ENCODE measurements at regions of chr10 and their contacts with region 1.

Region 1: DNA sequence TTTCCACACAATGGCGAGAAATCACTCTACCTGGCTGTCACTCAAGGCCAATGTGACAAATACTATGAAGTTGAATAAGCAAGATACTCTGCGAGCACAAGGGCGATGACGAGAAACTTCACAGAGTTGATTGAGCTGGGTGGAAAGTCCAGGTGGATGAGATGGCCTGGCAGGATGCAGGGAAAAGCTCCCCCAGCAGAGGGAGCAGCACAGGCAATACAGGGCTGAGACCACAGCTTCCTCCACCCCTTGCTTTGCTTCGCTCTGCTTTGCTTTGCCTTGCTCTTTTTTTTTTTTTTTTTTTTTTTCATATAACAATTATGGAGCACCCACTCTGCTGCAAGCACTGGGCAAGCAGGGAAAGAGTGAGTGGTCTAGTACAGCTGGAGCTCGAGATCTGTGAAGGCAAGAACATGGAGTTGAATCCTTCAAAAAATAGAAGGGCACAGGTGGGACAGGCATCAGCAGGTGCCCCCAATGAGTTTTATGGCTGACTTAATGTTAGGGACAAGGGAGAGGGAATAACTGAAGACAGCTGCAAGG is 88.3 kb downstream of the CABCOCO1 start:
- DNase-seq: peak; percentile 71 to 78
- ATAC-seq: peak; percentile 77
- H3K4me3 ChIP-seq: no peak overlapping the region
- H3K27ac ChIP-seq: peak overlapping the region in 1 of 2 donors; percentile 21
- H3K4me1 ChIP-seq: peaks cover 3 to 13% of the 10 kb centered on the region in 2 donors
- H3K27me3 ChIP-seq: no peaks in the 10 kb centered on the region

Region 2: DNA sequence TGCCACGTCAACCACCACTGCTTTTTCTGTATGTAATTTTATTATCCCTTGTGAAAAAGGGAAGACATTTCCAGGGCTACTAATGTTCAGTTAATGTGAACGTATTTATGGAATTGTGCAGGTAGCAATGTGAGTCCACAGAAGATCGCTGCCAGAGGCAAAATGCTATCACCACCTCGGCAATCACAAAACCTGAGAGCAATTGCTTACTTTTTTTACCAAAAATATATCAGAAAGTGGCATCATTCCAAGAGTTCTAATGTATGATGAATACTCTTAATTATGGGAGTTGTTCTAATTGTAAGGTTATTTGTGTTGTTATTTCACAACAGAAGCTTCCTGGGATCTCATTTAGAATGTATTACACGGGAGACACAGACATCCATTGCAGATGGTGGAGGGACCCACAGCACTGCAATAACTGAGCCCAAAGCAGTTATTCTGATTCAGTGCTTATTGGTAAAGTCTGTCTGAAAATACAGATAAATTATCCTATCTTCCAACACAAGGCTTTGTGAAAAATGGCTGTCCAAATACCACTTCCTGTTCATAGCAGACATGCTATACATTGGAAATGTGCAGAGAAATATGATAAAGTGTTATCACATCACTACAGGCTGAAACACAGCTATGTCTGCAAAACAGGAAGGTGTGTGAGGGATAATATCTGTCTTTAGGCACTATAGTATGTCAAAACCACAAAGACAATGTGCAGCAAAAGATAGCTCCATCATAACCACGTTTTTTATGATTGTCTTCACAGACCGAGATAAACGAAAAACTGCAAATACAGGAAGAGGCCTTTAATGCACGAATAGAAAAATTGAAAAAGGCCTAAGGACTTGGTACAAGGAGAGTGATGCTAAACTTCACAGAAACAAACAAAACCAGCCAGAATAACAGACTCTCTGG is 14.4 kb after region 1 on chr10:
- intact Hi-C with region 1: no loop called
- DNase-seq: no peak
- ATAC-seq: no peak
- H3K4me3 ChIP-seq: no peak overlapping the region
- H3K27ac ChIP-seq: no peak overlapping the region
- H3K4me1 ChIP-seq: peaks cover 0 to 1% of the 10 kb centered on the region in 2 donors
- H3K27me3 ChIP-seq: no peaks in the 10 kb centered on the region

Region 3: GRCh38 chr10:61786728-61787127 is 35.7 kb after region 1 on chr10:
- intact Hi-C with region 1: loop called (anchors 5 kb)
- DNase-seq: no peak
- ATAC-seq: no peak
- H3K4me3 ChIP-seq: peak overlapping the region in 1 of 2 donors; percentile 64
- H3K27ac ChIP-seq: peak overlapping the region; percentile 57 to 94
- H3K4me1 ChIP-seq: peaks cover 0 to 7% of the 10 kb centered on the region in 2 donors
- H3K27me3 ChIP-seq: no peaks in the 10 kb centered on the region

Region 4: DNA sequence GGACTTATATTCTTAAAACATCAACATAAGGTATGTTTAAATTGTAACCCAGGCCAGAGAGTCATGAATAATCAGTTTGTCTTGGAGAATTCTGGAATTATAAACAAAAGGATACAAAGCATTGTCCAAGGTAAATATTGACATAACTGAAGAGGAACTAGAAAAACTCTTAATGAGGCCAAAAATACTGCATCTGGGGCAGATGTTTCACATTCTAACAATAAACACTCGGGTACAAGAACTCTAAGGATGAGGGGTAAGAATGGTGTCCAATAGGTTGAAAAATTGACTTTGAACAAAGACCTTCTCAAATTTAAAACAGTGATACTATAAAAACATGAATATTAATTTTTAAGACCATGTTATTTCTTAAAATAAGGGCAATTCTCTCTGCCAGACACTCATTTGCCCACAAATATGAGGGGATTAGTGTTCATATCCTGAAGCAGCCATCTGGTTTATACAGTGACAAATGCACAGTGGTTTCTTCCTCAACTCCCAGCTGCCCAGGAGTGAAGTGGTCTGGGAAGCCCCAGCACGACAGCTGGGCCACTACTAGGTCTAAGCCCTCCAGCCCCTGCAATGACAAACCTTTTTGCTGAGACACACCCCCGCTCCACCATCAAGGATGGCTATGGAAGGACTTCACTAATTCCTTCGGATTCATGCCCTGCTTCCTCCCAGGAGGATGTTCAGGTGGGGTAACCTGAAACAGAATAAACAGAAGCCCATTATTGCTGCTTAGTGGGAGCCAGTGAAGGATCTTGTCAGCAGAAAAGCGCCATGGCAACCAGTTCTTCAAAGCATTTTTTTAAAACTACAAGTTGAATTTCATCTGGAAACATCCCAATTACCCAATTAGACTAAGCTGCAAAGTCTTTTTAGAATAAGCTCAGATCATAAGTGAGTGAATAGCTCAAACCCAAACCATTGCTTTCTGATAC is 43.0 kb after region 1 on chr10:
- intact Hi-C with region 1: loop called (anchors 5 kb)
- DNase-seq: no peak
- ATAC-seq: no peak
- H3K4me3 ChIP-seq: no peak overlapping the region
- H3K27ac ChIP-seq: no peak overlapping the region
- H3K4me1 ChIP-seq: peaks cover 0 to 4% of the 10 kb centered on the region in 2 donors
- H3K27me3 ChIP-seq: no peaks in the 10 kb centered on the region

Region 5: GRCh38 chr10:61804414-61804813 is 53.4 kb after region 1 on chr10:
- intact Hi-C with region 1: no loop called
- DNase-seq: no peak
- ATAC-seq: no peak
- H3K4me3 ChIP-seq: no peak overlapping the region
- H3K27ac ChIP-seq: no peak overlapping the region
- H3K4me1 ChIP-seq: peaks cover 0 to 3% of the 10 kb centered on the region in 2 donors
- H3K27me3 ChIP-seq: no peaks in the 10 kb centered on the region

Region 6: GRCh38 chr10:61835069-61835945 is 84.3 kb after region 1 on chr10:
- intact Hi-C with region 1: loop called (anchors 2 to 5 kb)
- DNase-seq: no peak
- ATAC-seq: peak; percentile 68
- H3K4me3 ChIP-seq: no peak overlapping the region
- H3K27ac ChIP-seq: peak overlapping the region; percentile 1 to 30
- H3K4me1 ChIP-seq: peaks cover 2 to 5% of the 10 kb centered on the region in 2 donors
- H3K27me3 ChIP-seq: no peaks in the 10 kb centered on the region

Region 7: DNA sequence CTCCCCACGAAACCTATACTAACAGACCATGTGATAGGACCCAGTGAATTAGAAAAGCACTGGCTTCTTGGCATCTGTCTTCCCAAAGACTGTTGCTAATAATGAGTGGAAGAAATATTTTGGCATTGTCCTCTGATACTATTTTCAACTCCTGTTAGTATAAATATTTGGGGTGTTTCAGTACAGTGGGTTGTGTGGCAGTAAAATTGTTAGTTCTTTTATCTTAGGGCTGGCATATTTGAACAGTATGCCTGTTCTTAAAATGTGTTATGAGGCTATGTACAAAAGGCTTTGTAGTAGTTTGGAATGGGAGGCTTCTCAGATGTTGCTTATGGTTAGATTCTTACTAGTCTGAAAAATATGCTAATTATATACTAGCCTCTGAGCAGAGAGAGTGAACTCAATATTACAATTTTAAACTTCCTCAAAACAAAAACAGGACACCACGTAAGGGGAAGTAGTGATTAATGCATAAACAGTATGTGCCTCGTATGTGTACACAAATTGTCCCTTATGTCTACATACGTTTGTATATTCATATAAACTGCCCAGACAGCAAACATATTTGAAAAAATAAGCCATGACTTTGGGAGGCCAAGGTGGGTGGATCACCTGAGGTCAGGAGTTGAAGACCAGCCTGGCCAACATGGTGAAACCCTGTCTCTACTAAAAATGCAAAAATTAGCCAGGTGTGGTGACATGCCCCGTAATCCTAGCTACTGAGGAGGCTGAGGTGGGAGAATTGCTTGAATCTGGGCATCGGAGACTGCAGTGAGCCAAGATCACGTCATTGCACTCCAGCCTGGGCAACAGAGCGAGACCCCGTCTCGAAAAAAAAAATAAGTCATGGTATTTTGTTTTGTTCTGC is 265.9 kb after region 1 on chr10:
- intact Hi-C with region 1: loop called in 1 of 2 experiments (anchors 10 kb)
- DNase-seq: no peak
- ATAC-seq: no peak
- H3K4me3 ChIP-seq: no peak overlapping the region
- H3K27ac ChIP-seq: peak overlapping the region; percentile 13 to 57
- H3K4me1 ChIP-seq: peaks cover 2 to 7% of the 10 kb centered on the region in 2 donors
- H3K27me3 ChIP-seq: no peaks in the 10 kb centered on the region

Region 8: DNA sequence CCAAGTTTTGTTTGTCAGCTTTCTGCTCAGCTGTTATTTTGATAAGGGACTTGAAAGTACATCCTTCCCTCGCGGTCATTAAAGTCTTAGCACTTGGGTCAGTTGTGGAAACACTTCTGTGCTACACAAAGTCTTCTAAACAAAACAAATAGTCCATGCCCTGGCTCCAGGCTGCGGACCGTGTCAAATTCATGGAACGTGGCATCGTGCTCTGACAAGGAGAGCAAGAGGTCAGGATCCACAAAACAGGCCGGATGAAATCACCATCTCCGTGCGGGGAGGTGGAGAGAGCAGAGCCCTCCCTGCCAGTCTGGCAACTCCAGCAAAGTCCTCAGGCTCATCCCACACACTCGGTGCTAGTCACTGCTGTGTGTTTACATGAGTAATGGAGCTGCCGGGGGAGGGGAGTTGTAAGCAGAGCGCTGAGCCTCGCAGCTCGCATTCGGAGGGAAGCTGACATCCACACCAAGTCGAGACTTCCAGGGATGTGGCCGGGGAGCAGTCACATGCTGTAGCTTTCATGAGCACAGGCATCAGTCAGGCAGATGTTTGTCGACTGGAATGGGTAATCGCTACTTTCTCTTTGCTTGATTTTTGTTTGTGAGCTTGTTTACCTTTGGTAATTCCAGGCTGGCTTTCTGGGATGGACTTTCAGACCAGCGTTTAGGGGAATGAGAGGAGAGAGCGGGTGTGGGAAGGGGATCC is 298.1 kb after region 1 on chr10:
- intact Hi-C with region 1: loop called in 1 of 2 experiments (anchors 10 kb)
- DNase-seq: peak; percentile 91 to 94
- ATAC-seq: peak; percentile 90
- H3K4me3 ChIP-seq: peak overlapping the region; percentile 14 to 99
- H3K27ac ChIP-seq: peak overlapping the region; percentile 87 to 96
- H3K4me1 ChIP-seq: peaks cover 7 to 9% of the 10 kb centered on the region in 2 donors
- H3K27me3 ChIP-seq: no peaks in the 10 kb centered on the region

Region 9: GRCh38 chr10:62231371-62231770 is 480.4 kb after region 1 on chr10:
- intact Hi-C with region 1: loop called in 1 of 2 experiments (anchors 10 kb)
- DNase-seq: no peak
- ATAC-seq: peak; percentile 78
- H3K4me3 ChIP-seq: no peak overlapping the region
- H3K27ac ChIP-seq: no peak overlapping the region
- H3K4me1 ChIP-seq: peaks cover 0 to 2% of the 10 kb centered on the region in 2 donors
- H3K27me3 ChIP-seq: no peaks in the 10 kb centered on the region